ENCODE measurements at regions of chr2 and their contacts with region 1.

Region 1: DNA sequence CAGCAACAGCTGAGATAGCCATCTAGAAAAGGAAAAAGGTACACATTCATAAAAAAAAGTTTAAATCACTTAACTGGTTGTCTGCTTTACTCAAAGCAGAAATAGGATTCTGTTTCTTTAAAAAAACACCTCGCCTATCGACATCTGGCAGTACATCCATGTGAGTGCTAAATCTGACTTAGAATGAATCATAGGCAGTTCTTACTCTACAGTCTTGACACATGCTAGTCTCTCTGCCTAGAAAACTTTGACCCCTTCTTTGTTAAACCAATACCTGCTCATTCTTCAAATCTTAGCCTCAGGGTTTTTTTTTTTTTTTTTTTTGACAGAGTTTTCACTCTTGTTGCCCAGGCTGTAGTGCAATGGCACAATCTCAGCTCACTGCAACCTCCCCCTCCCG is 37.1 kb upstream of the GPR75 start:
- DNase-seq: no peak
- ATAC-seq: no peak

Region 2: DNA sequence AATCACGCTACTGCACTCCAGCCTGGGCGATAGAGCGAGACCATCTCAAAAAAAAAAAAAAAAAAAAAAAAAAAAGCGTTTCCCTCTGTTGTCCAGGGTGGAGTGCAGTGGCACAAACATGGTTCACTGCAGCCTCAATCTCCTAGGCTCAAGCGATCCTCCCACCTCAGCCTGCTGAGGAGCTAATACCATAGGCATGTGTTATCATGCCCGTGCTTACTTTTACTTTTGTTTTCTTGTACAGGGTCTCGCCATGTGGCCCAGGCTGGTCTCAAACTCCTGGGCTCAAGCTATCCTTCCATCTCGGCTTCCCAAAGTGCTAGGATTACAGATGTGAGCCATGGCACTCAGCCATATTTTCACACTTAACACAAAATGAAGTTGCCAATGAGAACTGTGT is 36.5 kb after region 1 on chr2:
- intact Hi-C with region 1: loop called (anchors 5 kb)
- DNase-seq: no peak
- ATAC-seq: no peak

Region 3: DNA sequence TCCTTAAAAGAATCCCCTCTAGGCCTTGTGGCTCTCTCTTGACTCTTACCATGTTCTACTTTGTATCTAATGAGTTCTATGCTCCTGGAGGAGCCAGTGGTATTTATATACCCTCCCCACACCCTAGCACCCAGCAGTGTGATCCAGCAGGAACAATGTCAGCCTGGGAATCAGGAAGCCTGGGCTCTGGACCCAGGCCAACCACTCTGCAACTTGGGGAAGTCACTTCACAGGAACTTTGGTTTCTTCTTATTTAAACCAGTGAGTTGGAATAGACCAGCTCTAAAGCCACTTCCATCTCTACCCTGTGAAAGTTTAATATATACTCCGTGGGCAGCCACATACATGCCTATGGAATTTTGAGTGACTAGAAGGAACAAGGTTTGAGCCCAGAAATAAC is 547.6 kb after region 1 on chr2:
- intact Hi-C with region 1: no loop called
- DNase-seq: peak; percentile 71
- ATAC-seq: peak; percentile 20

Measured in Right ventricle myocardium superior (tissue), 1 donor.